PC-3 (cell line): ENCODE measurements at regions of chr1 and their contacts with region 1.

Region 1: DNA sequence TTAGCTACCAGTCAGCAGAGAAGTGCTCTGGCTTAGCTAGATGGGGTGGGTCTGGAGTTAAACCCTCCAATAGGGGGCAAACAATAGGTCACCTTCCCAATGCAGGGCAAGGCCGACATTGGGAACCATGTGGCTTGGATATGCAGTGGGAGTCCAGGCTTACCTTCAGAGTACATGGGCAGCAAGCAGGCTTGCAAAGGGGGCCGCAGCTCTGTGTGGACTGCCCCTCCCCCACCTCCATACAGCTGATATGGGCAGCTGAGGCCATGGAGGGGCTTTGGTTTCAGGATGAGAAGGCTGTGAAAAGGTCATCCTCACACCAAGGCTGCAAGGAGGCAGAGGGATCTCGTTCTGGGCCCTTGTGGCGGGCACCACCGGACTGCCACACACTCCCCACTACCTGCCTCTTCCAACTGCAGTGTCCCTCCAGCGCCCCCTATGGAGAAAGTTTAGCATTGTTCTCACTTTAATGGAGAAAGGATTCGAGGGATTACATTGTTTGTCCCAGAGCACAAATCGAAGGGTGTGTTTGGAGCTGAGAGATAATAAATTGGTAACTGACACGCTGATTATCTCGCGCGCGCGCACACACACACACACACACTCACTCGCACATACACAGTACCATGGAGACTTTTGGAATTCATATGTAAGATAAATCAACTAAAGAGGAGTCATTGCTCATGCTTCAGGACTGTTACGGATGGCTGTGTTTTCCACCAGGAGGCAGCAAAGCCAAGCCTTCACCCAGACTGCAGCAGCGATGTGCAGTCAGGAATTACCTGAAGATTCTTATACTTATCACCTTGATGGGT is 7.1 kb upstream of the SMCP start:
- DNase-seq: peak; percentile 82
- ATAC-seq: peak; percentile 88
- H3K4me3 ChIP-seq: no peak overlapping the region
- H3K27ac ChIP-seq: no peak overlapping the region
- H3K4me1 ChIP-seq: peaks cover 11% of the 10 kb centered on the region
- H3K27me3 ChIP-seq: no peaks in the 10 kb centered on the region
- CTCF ChIP-seq: peak; percentile 94

Region 2: GRCh38 chr1:152926091-152926490 is 55.1 kb after region 1 on chr1:
- CTCF ChIA-PET with region 1: interaction called, 3 read pairs
- POLR2A ChIA-PET with region 1: no interaction called
- intact Hi-C with region 1: loop called (anchors 1 kb)
- DNase-seq: peak; percentile 78
- ATAC-seq: peak; percentile 54
- H3K4me3 ChIP-seq: no peak overlapping the region
- H3K27ac ChIP-seq: no peak overlapping the region
- H3K4me1 ChIP-seq: no peaks in the 10 kb centered on the region
- H3K27me3 ChIP-seq: peaks cover 24% of the 10 kb centered on the region
- CTCF ChIP-seq: peak; percentile 85

Region 3: GRCh38 chr1:153192697-153193096 is 321.7 kb after region 1 on chr1:
- CTCF ChIA-PET with region 1: interaction called, 8 read pairs
- POLR2A ChIA-PET with region 1: no interaction called
- intact Hi-C with region 1: loop called (anchors 1 kb)
- DNase-seq: peak; percentile 74
- ATAC-seq: peak; percentile 63
- H3K4me3 ChIP-seq: no peak overlapping the region
- H3K27ac ChIP-seq: no peak overlapping the region
- H3K4me1 ChIP-seq: no peaks in the 10 kb centered on the region
- H3K27me3 ChIP-seq: peaks cover 46% of the 10 kb centered on the region
- CTCF ChIP-seq: peak; percentile 94

Region 4: DNA sequence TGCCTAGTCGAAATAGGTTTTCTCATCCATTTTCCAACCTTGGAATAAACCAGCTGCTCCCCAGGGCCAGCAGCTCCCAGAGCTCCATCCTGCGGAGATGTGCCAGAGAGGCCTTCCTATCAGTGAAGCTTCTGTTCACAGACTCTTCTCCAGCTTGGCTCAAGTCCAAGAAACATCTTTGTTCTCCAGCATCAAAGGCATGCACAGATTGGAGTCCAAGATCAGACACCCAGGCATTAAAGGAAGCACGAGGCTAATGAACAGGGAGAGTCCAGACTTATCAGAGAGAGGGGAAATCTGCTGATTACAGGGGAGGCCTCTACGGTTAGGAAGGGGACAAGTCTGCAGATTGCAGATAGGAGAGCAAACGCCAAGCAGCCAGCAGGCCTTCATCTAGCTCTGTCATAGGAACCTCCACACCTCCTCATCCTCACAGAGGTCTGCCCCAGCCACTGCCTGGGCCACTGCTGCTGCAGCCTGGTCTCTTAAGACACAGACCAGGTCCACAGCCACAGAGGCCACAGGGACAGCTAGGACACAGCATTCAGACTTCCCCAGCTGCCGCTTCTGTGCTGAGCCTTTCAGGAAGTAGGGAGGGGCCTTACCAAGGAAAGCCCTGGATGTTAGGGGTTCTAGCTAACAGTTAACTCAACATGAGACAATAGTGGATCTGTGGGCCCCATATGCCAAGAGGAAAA is 349.7 kb after region 1 on chr1:
- CTCF ChIA-PET with region 1: no interaction called
- POLR2A ChIA-PET with region 1: no interaction called
- intact Hi-C with region 1: loop called (anchors 1 kb)
- DNase-seq: no peak
- ATAC-seq: no peak
- H3K4me3 ChIP-seq: no peak overlapping the region
- H3K27ac ChIP-seq: no peak overlapping the region
- H3K4me1 ChIP-seq: no peaks in the 10 kb centered on the region
- H3K27me3 ChIP-seq: peaks cover 82% of the 10 kb centered on the region
- CTCF ChIP-seq: no peak